ENCODE measurements at regions of chr1 and their contacts with region 1.

Region 1: GRCh38 chr1:93021539-93022134 is 57.4 kb upstream of the MTF2 start:
- DNase-seq: no peak
- ATAC-seq: peak; percentile 72
- H3K4me3 Mint-ChIP-seq: no peak overlapping the region
- H3K27ac Mint-ChIP-seq: no peak overlapping the region
- H3K4me1 Mint-ChIP-seq: no peaks in the 10 kb centered on the region
- H3K27me3 Mint-ChIP-seq: peaks cover 3% of the 10 kb centered on the region

Region 2: GRCh38 chr1:91217911-91218310 is 1803.7 kb before region 1 on chr1:
- CTCF ChIA-PET with region 1: no interaction called
- POLR2A ChIA-PET with region 1: no interaction called
- intact Hi-C with region 1: no loop called
- DNase-seq: no peak
- ATAC-seq: no peak
- H3K4me3 Mint-ChIP-seq: no peak overlapping the region
- H3K27ac Mint-ChIP-seq: no peak overlapping the region
- H3K4me1 Mint-ChIP-seq: no peaks in the 10 kb centered on the region
- H3K27me3 Mint-ChIP-seq: peaks cover 2% of the 10 kb centered on the region

Region 3: DNA sequence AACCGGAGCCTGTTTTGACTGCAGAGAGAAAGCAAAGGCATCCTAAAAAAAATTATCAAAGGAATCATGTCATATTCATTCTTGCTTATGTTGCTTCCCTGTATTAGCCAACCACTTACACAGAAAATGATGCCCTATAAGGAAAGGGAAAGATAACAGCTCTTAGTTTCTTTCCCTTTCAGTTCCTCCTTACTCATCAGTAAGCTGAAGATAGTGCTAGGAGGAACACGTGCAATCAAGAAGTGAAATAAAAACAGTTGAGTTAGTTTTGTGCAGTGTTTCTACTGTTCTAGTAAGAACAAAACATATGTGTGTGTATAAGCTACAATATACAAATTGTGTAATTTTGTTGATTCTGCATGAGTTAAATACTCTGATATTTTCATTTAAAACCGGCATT is 12.1 kb after region 1 on chr1:
- CTCF ChIA-PET with region 1: interaction called, 10 read pairs
- POLR2A ChIA-PET with region 1: no interaction called
- intact Hi-C with region 1: no loop called
- DNase-seq: no peak
- ATAC-seq: peak; percentile 74
- H3K4me3 Mint-ChIP-seq: no peak overlapping the region
- H3K27ac Mint-ChIP-seq: no peak overlapping the region
- H3K4me1 Mint-ChIP-seq: peaks cover 34% of the 10 kb centered on the region
- H3K27me3 Mint-ChIP-seq: no peaks in the 10 kb centered on the region

Region 4: GRCh38 chr1:93061895-93062792 is 40.5 kb after region 1 on chr1:
- CTCF ChIA-PET with region 1: interaction called, 38 read pairs
- POLR2A ChIA-PET with region 1: no interaction called
- intact Hi-C with region 1: loop called (anchors 1 kb)
- DNase-seq: peak; percentile 63
- ATAC-seq: peak; percentile 89
- H3K4me3 Mint-ChIP-seq: no peak overlapping the region
- H3K27ac Mint-ChIP-seq: no peak overlapping the region
- H3K4me1 Mint-ChIP-seq: no peaks in the 10 kb centered on the region
- H3K27me3 Mint-ChIP-seq: peaks cover 10% of the 10 kb centered on the region

Measured in activated CD4-positive, alpha-beta T cell treated with anti-CD3 and anti-CD28 coated beads for 36 hours (primary cell).